ENCODE measurements at regions of chr21 and their contacts with region 1.

Region 1: GRCh38 chr21:36330904-36331303 is 10.9 kb downstream of the MORC3 start:
- DNase-seq: peak in 7 of 9 donors; percentile 32 to 62 (median 55)
- ATAC-seq: peak; percentile 92
- H3K4me3 ChIP-seq: no peak overlapping the region
- H3K4me3 Mint-ChIP-seq: peak overlapping the region in 7 of 10 donors; percentile 0 to 65 (median 37)
- H3K27ac ChIP-seq: peak overlapping the region; percentile 12
- H3K27ac Mint-ChIP-seq: peak overlapping the region in 8 of 9 donors; percentile 72 to 90 (median 86)
- H3K4me1 ChIP-seq: peaks cover 18 to 23% of the 10 kb centered on the region in 2 donors
- H3K4me1 Mint-ChIP-seq: peaks cover 18 to 74% (median 61%) of the 10 kb centered on the region in 7 donors
- H3K27me3 ChIP-seq: no peaks in the 10 kb centered on the region
- H3K27me3 Mint-ChIP-seq: no peaks in the 10 kb centered on the region

Region 2: GRCh38 chr21:36141513-36141925 is 189.4 kb before region 1 on chr21:
- CTCF ChIA-PET with region 1: interaction called, 9 read pairs
- POLR2A ChIA-PET with region 1: interaction called, 10 read pairs
- intact Hi-C with region 1: loop called (anchors 1 kb)
- DNase-seq: peak; percentile 50 to 92 (median 84)
- ATAC-seq: peak; percentile 99
- H3K4me3 ChIP-seq: no peak overlapping the region
- H3K4me3 Mint-ChIP-seq: peak overlapping the region in 5 of 10 donors; percentile 1 to 15 (median 3)
- H3K27ac ChIP-seq: peak overlapping the region; percentile 74
- H3K27ac Mint-ChIP-seq: peak overlapping the region; percentile 16 to 92 (median 83)
- H3K4me1 ChIP-seq: peaks cover 18 to 19% of the 10 kb centered on the region in 2 donors
- H3K4me1 Mint-ChIP-seq: peaks cover 11 to 42% (median 39%) of the 10 kb centered on the region in 7 donors
- H3K27me3 ChIP-seq: no peaks in the 10 kb centered on the region
- H3K27me3 Mint-ChIP-seq: no peaks in the 10 kb centered on the region

Region 3: DNA sequence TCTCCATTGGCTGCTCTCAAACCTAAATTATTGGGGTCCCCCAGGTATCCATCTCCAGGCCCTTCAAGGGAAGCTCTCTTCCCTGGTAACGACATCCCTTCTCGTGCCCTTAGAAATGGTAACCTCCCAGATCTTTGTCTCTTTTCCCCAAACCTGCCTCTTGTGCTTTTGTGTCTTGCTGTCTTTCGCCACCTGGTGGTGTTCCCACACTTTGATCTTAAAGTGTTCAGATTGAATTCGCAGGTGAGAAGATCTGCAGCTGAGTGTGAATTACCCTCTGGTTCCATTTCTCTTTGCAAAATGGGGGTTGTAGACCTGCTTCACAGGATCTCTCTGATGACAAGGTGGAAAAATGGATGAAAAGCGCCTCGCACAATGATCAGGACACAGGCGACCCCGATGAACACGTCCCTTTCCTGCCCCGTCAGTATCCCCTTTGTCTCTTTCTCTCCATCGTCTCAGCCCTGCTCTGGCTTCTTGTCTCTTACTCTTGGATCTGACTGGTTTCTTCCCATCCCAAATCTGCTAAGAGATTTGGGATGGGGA is 121.2 kb before region 1 on chr21:
- CTCF ChIA-PET with region 1: interaction called, 4 read pairs
- POLR2A ChIA-PET with region 1: no interaction called
- intact Hi-C with region 1: loop called in 1 of 2 experiments (anchors 1 kb)
- DNase-seq: peak in 7 of 9 donors; percentile 20 to 57 (median 51)
- ATAC-seq: no peak
- H3K4me3 ChIP-seq: no peak overlapping the region
- H3K4me3 Mint-ChIP-seq: no peak overlapping the region
- H3K27ac ChIP-seq: no peak overlapping the region
- H3K27ac Mint-ChIP-seq: peak overlapping the region in 2 of 9 donors; percentile 3 to 38
- H3K4me1 ChIP-seq: no peaks in the 10 kb centered on the region
- H3K4me1 Mint-ChIP-seq: peaks cover 1 to 18% (median 9%) of the 10 kb centered on the region in 7 donors
- H3K27me3 ChIP-seq: no peaks in the 10 kb centered on the region
- H3K27me3 Mint-ChIP-seq: no peaks in the 10 kb centered on the region

Region 4: DNA sequence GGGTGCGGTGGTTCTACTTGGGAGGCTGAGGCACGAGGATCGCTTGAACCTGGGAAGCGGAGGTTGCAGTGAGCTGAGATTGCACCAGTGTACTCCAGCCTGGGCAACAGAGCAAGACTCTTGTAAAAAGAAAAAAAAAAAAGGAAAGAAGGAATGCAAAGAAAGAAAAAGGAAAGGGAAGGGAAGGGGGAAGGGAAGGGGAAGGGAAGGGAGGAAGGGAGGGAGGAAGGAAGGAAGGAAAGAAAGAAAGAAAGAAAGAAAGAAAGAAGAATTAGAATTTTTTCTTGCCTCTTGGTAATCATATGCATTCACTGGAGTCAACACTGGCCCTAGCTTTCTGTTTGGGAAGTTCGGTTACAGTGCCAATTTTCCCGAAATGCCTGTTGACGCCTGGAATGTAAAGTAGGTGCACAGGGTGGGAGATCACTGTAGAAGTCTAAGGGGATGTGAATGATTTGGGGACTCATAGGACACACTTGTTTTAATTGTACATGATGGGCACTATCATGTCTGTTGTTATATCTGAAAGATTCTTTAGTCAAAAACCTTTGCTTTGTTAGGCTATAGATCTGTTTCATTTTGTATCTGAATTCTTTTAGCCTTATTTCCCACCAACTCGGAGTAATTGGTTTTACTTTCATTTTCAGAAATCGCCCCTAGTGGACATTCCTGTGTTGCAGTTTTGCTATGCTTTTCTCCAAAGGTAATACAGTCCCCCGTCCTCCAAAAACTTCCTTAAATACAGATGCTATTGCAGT is 70.7 kb before region 1 on chr21:
- CTCF ChIA-PET with region 1: interaction called, 4 read pairs
- POLR2A ChIA-PET with region 1: interaction called, 3 read pairs
- intact Hi-C with region 1: loop called (anchors 1 to 2 kb)
- DNase-seq: peak in 7 of 9 donors; percentile 54 to 76 (median 68)
- ATAC-seq: peak; percentile 88
- H3K4me3 ChIP-seq: peak overlapping the region; percentile 57
- H3K4me3 Mint-ChIP-seq: peak overlapping the region; percentile 81 to 91 (median 86)
- H3K27ac ChIP-seq: peak overlapping the region; percentile 76
- H3K27ac Mint-ChIP-seq: peak overlapping the region; percentile 89 to 97 (median 93)
- H3K4me1 ChIP-seq: peaks cover 0 to 6% of the 10 kb centered on the region in 2 donors
- H3K4me1 Mint-ChIP-seq: peaks cover 9 to 24% (median 18%) of the 10 kb centered on the region in 7 donors
- H3K27me3 ChIP-seq: no peaks in the 10 kb centered on the region
- H3K27me3 Mint-ChIP-seq: no peaks in the 10 kb centered on the region

Region 5: DNA sequence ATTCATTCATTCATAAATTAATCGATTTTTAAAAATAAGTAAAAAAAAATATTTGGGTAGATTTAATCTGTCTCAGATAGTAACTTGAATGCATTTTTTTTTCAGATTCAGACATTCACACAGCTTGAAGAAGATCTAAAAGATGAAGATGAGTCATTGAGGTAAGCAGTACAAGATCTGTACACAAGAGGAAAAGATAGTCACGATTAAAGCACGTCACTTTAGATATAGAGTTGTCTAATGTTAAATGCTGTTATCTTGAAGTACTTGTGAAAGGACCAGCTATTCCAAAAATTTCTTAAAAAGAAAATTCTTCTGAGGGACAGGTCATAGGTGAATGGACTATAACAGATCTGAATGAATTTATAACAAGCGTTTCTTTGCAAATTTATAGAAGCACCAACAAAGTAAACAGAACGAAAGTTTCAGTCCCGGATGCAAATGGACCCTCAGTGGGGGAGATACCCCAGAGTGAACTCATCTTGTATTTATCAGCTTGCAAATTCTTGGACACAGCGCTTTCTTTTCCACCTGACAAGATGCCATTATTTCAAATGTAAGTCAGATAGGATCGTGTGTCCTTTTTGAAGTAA is 42.2 kb before region 1 on chr21:
- CTCF ChIA-PET with region 1: interaction called, 4 read pairs
- POLR2A ChIA-PET with region 1: interaction called, 12 read pairs
- intact Hi-C with region 1: loop called in 1 of 2 experiments (anchors 1 kb)
- DNase-seq: peak in 6 of 9 donors; percentile 55 to 77 (median 68)
- ATAC-seq: peak; percentile 87
- H3K4me3 ChIP-seq: peak overlapping the region; percentile 40
- H3K4me3 Mint-ChIP-seq: peak overlapping the region; percentile 56 to 90 (median 80)
- H3K27ac ChIP-seq: peak overlapping the region; percentile 96
- H3K27ac Mint-ChIP-seq: peak overlapping the region; percentile 94 to 100 (median 98)
- H3K4me1 ChIP-seq: peaks cover 7 to 9% of the 10 kb centered on the region in 2 donors
- H3K4me1 Mint-ChIP-seq: peaks cover 6 to 30% (median 23%) of the 10 kb centered on the region in 7 donors
- H3K27me3 ChIP-seq: no peaks in the 10 kb centered on the region
- H3K27me3 Mint-ChIP-seq: peaks cover 0 to 3% (median 0%) of the 10 kb centered on the region in 5 donors

Region 6: DNA sequence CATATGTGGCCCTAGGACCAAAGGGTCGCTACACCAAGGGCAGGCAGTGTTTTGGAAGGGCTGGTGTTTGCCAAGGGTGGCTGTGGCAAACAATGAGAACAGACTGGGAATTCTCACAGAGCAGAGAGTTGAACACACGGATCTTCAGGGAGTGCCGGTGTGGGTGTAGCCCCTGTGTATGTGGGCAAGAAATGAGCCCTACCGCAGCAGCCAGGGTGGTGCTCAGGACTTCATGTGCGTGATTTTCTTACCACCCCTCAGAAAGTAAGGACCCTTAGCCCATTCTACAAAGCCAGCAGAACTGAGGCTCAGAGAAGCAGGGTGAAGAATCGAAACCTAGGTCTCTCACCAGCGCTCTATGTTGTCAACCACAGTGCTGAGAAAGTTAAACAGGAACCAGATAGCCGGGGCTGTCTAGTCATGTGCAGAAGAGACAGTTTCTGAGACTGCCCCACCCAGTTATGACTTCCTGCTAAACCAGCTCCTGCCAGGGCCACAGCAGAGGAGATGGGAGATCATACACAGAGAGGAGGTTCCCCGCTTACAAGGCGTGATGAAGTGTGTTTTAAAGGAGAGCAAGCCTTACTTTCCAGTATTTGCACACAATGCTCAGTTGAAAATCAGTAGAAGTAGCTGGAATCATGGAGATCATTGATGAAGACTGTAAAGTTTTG is 32.8 kb before region 1 on chr21:
- CTCF ChIA-PET with region 1: interaction called, 7 read pairs
- POLR2A ChIA-PET with region 1: interaction called, 361 read pairs
- intact Hi-C with region 1: no loop called
- DNase-seq: peak; percentile 35 to 89 (median 87)
- ATAC-seq: peak; percentile 99
- H3K4me3 ChIP-seq: peak overlapping the region; percentile 52
- H3K4me3 Mint-ChIP-seq: peak overlapping the region; percentile 71 to 88 (median 84)
- H3K27ac ChIP-seq: peak overlapping the region; percentile 84
- H3K27ac Mint-ChIP-seq: peak overlapping the region; percentile 91 to 100 (median 98)
- H3K4me1 ChIP-seq: peaks cover 21 to 36% of the 10 kb centered on the region in 2 donors
- H3K4me1 Mint-ChIP-seq: peaks cover 24 to 53% (median 40%) of the 10 kb centered on the region in 7 donors
- H3K27me3 ChIP-seq: no peaks in the 10 kb centered on the region
- H3K27me3 Mint-ChIP-seq: no peaks in the 10 kb centered on the region

Measured in naive thymus-derived CD4-positive, alpha-beta T cell (primary cell).